HepG2 (cell line): ENCODE measurements at regions of chr6 and their contacts with region 1.

Region 1: GRCh38 chr6:98894810-98895209 is 52.9 kb downstream of the FBXL4 start:
- DNase-seq: no peak
- ATAC-seq: no peak
- H3K4me3 ChIP-seq: no peak overlapping the region
- H3K27ac ChIP-seq: no peak overlapping the region
- H3K4me1 ChIP-seq: no peaks in the 10 kb centered on the region
- H3K27me3 ChIP-seq: no peaks in the 10 kb centered on the region
- CTCF ChIP-seq: no peak
- EP300 ChIP-seq: no peak
- POLR2A ChIP-seq: no peak
- RAD21 ChIP-seq: no peak

Region 2: DNA sequence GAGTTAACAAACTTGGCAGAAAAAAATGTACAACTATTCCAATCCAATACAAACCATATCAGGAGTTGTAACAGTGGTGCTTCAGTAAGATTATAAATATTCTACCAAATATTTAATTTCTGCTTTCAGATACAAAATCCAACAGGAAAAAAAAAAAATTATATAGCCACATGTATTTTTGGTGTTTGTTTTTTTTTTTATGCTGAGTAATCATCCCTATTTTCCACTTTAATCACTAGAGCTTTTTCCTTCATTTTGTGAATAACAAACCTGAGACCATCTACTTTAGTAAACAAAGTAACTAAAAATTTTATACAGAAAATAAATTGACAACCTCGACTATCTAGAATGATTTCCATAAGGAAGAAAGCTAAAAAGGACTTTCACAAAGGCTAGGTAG is 1648.0 kb before region 1 on chr6:
- CTCF ChIA-PET with region 1: no interaction called
- POLR2A ChIA-PET with region 1: no interaction called
- in situ Hi-C with region 1: no loop called
- intact Hi-C with region 1: no loop called
- DNase-seq: no peak
- ATAC-seq: no peak
- H3K4me3 ChIP-seq: no peak overlapping the region
- H3K27ac ChIP-seq: no peak overlapping the region
- H3K4me1 ChIP-seq: no peaks in the 10 kb centered on the region
- H3K27me3 ChIP-seq: no peaks in the 10 kb centered on the region
- CTCF ChIP-seq: no peak
- EP300 ChIP-seq: no peak
- POLR2A ChIP-seq: no peak
- RAD21 ChIP-seq: no peak

Region 3: GRCh38 chr6:98871057-98871456 is 23.8 kb before region 1 on chr6:
- CTCF ChIA-PET with region 1: no interaction called
- POLR2A ChIA-PET with region 1: no interaction called
- in situ Hi-C with region 1: no loop called
- intact Hi-C with region 1: loop called (anchors 1 kb)
- DNase-seq: no peak
- ATAC-seq: no peak
- H3K4me3 ChIP-seq: no peak overlapping the region
- H3K27ac ChIP-seq: no peak overlapping the region
- H3K4me1 ChIP-seq: no peaks in the 10 kb centered on the region
- H3K27me3 ChIP-seq: no peaks in the 10 kb centered on the region
- CTCF ChIP-seq: no peak
- EP300 ChIP-seq: no peak
- POLR2A ChIP-seq: no peak
- RAD21 ChIP-seq: no peak

Region 4: GRCh38 chr6:98992535-98992934 is 97.7 kb after region 1 on chr6:
- CTCF ChIA-PET with region 1: no interaction called
- POLR2A ChIA-PET with region 1: no interaction called
- in situ Hi-C with region 1: no loop called
- intact Hi-C with region 1: no loop called
- DNase-seq: no peak
- ATAC-seq: no peak
- H3K4me3 ChIP-seq: no peak overlapping the region
- H3K27ac ChIP-seq: no peak overlapping the region
- H3K4me1 ChIP-seq: no peaks in the 10 kb centered on the region
- H3K27me3 ChIP-seq: 0 out of 5 replicates have a peak, but pooled peaks cover 0 to 4% of the 10 kb centered on the region in 2 experiments
- CTCF ChIP-seq: no peak
- EP300 ChIP-seq: no peak
- POLR2A ChIP-seq: no peak
- RAD21 ChIP-seq: no peak